PC-9 (cell line): ENCODE measurements at regions of chrX and their contacts with region 1.

Region 1: DNA sequence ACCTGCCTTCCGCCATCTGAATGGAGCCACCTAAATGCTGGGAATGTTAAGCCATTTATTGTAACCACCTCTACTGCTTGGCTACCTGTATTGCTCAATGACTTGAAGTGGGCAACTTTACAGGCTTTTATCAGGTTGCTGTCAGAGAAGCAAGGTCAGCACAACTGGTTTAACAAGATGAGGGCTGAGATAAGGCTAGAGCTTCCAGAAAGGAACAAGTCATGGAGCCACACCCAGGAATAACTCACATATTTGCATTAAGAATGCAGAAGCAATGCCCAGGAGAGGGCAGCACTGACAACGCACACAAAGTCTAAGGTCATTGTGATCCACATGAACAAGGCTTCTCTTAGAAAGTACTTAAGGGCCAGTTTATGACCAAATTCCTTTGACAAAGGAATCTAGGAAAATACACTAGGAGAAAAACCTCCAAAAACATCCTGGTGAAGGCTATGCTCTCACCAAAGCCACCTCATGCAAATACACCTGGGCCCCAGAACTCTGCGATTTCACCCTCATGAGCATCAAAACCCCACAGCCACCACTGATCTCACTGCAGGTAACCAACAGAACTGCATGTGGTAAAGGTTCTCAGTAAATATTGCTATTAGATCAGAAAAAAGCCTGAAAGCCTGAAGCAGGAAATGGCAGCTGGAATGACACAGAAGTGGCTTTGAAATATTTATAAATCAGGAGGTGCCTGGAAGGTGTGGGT is 15.0 kb upstream of the STS start:
- DNase-seq: peak; percentile 78 to 100
- H3K4me3 ChIP-seq: peak overlapping the region; percentile 7; the same call in 1 of the 2 replicates
- H3K27ac ChIP-seq: peak overlapping the region; percentile 95
- H3K4me1 ChIP-seq: peaks cover 50% of the 10 kb centered on the region
- H3K27me3 ChIP-seq: no peaks in the 10 kb centered on the region
- CTCF ChIP-seq: peak; percentile 80

Region 2: GRCh38 chrX:6660567-6661264 is 471.8 kb before region 1 on chrX:
- CTCF ChIA-PET with region 1: no interaction called
- POLR2A ChIA-PET with region 1: interaction called, 5 read pairs
- intact Hi-C with region 1: loop called (anchors 1 kb)
- DNase-seq: peak; percentile 47 to 81
- H3K4me3 ChIP-seq: peak overlapping the region; percentile 16; the same call in 1 of the 2 replicates
- H3K27ac ChIP-seq: peak overlapping the region; percentile 89
- H3K4me1 ChIP-seq: peaks cover 25% of the 10 kb centered on the region
- H3K27me3 ChIP-seq: no peaks in the 10 kb centered on the region
- CTCF ChIP-seq: no peak

Region 3: GRCh38 chrX:7074148-7074907 is 58.2 kb before region 1 on chrX:
- CTCF ChIA-PET with region 1: interaction called, 21 read pairs
- POLR2A ChIA-PET with region 1: no interaction called
- intact Hi-C with region 1: no loop called
- DNase-seq: no peak
- H3K4me3 ChIP-seq: no peak overlapping the region
- H3K27ac ChIP-seq: no peak overlapping the region
- H3K4me1 ChIP-seq: no peaks in the 10 kb centered on the region
- H3K27me3 ChIP-seq: no peaks in the 10 kb centered on the region
- CTCF ChIP-seq: no peak

Region 4: GRCh38 chrX:7083468-7084396 is 48.8 kb before region 1 on chrX:
- CTCF ChIA-PET with region 1: no interaction called
- POLR2A ChIA-PET with region 1: no interaction called
- intact Hi-C with region 1: loop called (anchors 1 kb)
- DNase-seq: peak; percentile 51 to 95
- H3K4me3 ChIP-seq: no peak overlapping the region
- H3K27ac ChIP-seq: peak overlapping the region; percentile 73
- H3K4me1 ChIP-seq: peaks cover 17% of the 10 kb centered on the region
- H3K27me3 ChIP-seq: no peaks in the 10 kb centered on the region
- CTCF ChIP-seq: no peak

Region 5: GRCh38 chrX:7100022-7100421 is 32.5 kb before region 1 on chrX:
- CTCF ChIA-PET with region 1: no interaction called
- POLR2A ChIA-PET with region 1: no interaction called
- intact Hi-C with region 1: no loop called
- DNase-seq: no peak
- H3K4me3 ChIP-seq: no peak overlapping the region
- H3K27ac ChIP-seq: no peak overlapping the region
- H3K4me1 ChIP-seq: no peaks in the 10 kb centered on the region
- H3K27me3 ChIP-seq: no peaks in the 10 kb centered on the region
- CTCF ChIP-seq: no peak

Region 6: DNA sequence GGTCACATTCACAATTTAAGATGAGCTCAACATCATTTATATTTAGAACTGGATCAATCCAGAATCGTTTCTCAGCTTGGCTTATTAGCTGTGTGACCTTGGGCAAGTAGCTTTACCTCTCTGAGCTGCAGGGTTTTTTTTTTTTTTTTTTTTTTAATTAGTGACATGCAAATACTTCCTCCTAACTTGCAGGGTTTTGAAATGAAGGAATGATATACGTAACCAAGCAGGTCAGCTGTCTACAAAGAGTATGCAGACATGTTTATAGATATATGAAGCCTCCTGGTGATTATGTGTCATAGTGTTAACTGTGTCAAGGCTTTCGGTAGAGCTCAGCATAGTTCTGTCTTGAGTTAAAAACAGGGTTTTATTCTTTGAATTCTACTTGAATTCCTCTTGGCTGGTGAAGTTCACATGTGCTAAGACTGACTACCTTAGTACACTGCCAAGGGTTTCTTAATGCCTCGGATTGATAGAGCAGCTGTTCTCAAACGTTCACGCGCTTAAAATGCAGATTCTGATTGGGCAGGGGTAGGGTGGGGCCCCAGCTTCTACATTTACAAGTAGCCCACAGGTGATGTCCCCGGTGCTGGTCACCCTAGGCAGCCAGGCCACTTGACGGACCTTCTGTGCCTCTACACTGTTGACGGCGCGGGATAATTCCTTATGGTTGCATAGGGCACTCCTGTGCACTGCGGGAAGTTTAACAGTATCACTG is 14.4 kb after region 1 on chrX:
- CTCF ChIA-PET with region 1: no interaction called
- POLR2A ChIA-PET with region 1: no interaction called
- intact Hi-C with region 1: loop called (anchors 1 kb)
- DNase-seq: peak in 1 of 2 experiments; percentile 39
- H3K4me3 ChIP-seq: peak overlapping the region; percentile 90
- H3K27ac ChIP-seq: peak overlapping the region; percentile 99
- H3K4me1 ChIP-seq: peaks cover 38% of the 10 kb centered on the region
- H3K27me3 ChIP-seq: no peaks in the 10 kb centered on the region
- CTCF ChIP-seq: no peak

Region 7: DNA sequence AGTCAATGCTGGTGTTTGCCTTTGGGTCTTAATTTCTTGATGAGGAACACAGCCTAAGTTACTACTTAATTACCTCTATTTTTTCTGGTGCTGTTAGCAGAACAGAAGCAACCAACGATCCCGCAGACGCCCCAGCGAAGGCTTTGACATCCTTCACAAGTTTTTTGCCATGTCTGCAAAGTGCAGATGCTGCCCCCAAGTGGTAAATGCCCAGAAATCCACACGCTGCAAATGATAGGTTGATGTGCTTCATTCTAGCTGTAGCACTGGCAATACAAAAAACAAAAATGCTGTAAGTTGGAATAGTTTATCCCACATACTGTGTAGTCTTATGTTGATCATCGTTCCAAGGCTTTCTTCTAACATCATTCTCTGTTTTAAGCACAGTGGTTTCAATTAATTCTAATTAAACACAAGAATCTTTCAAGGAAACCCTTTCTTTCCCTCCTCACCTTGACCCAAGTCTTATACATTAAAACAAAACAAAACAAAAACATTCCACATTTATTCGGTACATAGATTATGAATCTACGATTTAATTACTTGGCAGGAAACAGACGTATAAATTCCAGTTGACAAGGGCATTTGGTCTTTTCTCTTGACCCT is 793.5 kb after region 1 on chrX:
- CTCF ChIA-PET with region 1: no interaction called
- POLR2A ChIA-PET with region 1: no interaction called
- intact Hi-C with region 1: loop called (anchors 10 kb)
- DNase-seq: peak; percentile 35 to 44
- H3K4me3 ChIP-seq: peak overlapping the region; percentile 57; the same call in 1 of the 2 replicates
- H3K27ac ChIP-seq: no peak overlapping the region
- H3K4me1 ChIP-seq: no peaks in the 10 kb centered on the region
- H3K27me3 ChIP-seq: no peaks in the 10 kb centered on the region
- CTCF ChIP-seq: peak; percentile 58